HEK293T (cell line): ENCODE measurements at regions of chr2 and their contacts with region 1.

Region 1: DNA sequence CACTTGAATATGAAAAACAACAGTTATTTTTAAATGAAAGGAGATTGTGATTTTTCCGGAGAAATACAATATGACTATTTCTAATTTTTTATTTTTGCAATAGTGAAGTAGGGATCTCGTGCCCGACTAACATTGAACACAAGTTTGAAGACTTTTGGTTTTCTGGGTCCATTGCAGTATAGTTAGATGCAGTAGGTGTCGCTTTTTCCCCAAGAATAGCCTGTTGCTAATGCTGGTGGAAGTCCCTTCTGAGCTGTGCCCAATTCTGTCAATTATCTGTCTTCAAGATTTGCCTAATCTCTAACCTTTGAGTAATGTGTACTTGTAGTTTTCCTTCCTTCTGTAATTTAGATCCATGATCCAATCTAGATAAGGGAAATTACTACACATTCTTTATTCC is 36.5 kb downstream of the SEMA4F start:
- DNase-seq: peak; percentile 61

Region 2: DNA sequence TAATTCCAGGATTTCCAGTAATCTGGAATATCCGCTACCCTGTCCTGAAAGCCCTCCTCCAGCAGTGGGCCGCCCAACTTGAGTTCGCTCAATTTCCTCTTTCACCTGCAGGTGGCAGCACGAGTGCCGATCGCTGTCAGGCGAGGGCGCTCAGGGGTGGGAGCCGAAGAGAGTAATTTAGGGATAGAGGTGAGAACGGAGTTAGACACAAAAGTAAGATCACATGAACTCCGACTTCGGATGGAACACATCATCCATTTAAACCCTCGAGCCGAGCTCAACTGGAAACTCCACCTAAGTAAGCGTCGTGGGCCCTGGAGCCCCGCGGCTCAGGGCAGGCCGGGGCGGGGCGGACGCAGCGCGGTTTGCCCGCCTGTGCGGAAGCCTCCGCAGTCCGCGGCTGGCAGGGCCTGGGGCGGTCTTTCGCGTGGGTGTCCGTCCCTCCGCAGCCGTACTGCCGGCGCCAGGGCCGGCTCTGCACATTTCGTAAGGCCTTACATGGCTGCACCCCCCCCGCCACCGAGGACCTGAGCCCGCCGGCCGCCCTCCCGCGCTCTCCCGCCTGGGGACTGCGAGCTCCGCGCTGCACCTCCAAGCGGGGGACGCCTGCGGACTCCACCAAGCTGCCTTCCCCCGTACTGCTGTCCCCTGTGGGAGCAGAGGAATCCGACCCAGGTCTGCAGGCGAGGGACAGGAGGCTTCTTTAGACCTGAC is 24.7 kb after region 1 on chr2:
- CTCF ChIA-PET with region 1: no interaction called
- POLR2A ChIA-PET with region 1: no interaction called
- DNase-seq: peak; percentile 88

Region 3: GRCh38 chr2:74876081-74876886 is 185.7 kb after region 1 on chr2:
- CTCF ChIA-PET with region 1: interaction called, 19 read pairs
- POLR2A ChIA-PET with region 1: no interaction called
- DNase-seq: peak; percentile 60

Region 4: DNA sequence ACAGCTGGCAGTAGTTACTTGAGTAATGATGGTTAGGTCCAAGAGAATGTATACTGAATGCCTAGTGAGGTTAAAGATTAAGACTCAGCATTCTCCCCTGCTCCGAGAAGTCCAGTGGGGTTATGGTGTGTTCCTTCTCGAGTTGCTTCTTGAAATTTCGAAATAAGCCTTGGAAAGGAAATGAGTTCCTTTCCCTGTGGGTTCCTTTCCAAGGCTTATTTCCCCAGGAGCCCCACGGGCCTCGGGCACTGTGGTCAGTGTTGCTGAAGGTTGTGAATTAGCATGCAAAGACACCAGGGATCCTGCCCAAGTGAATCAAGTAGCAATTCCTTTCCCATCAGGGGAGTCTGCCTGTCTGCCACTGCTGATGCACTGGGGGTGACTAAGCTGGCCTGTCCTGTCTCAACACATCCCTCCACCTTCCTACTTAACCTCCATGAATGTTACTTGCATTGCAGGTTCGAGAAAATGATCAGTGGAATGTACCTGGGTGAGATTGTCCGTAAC is 196.9 kb after region 1 on chr2:
- CTCF ChIA-PET with region 1: no interaction called
- POLR2A ChIA-PET with region 1: no interaction called
- DNase-seq: no peak